ENCODE measurements at regions of chr1 and their contacts with region 1.

Region 1: DNA sequence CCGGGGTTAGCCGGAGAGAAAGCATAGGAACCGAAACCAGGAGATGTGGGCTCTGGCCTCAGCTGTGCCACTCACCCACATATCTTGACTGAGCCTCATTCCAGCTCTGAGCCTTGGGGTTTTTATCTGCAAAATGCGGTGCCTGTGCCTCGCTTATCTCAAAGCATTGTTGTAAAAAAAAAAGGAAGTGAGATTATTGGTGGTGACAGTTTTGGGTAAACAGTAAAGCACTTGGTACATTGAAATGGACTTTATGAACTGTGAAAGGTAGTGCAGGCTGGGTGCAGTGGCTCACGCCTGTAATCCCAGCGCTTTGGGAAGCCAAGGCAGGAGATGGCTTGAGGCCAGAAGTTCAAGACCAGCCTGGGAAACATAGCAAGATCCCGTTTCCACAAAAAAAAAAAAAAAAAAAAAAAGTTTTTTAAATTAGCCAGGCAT is 3.8 kb downstream of the PTAFR start:
- H3K4me3 Mint-ChIP-seq: peak overlapping the region; percentile 66
- H3K27ac Mint-ChIP-seq: peak overlapping the region; percentile 91
- H3K4me1 Mint-ChIP-seq: peaks cover 77% of the 10 kb centered on the region
- H3K27me3 Mint-ChIP-seq: no peaks in the 10 kb centered on the region

Region 2: DNA sequence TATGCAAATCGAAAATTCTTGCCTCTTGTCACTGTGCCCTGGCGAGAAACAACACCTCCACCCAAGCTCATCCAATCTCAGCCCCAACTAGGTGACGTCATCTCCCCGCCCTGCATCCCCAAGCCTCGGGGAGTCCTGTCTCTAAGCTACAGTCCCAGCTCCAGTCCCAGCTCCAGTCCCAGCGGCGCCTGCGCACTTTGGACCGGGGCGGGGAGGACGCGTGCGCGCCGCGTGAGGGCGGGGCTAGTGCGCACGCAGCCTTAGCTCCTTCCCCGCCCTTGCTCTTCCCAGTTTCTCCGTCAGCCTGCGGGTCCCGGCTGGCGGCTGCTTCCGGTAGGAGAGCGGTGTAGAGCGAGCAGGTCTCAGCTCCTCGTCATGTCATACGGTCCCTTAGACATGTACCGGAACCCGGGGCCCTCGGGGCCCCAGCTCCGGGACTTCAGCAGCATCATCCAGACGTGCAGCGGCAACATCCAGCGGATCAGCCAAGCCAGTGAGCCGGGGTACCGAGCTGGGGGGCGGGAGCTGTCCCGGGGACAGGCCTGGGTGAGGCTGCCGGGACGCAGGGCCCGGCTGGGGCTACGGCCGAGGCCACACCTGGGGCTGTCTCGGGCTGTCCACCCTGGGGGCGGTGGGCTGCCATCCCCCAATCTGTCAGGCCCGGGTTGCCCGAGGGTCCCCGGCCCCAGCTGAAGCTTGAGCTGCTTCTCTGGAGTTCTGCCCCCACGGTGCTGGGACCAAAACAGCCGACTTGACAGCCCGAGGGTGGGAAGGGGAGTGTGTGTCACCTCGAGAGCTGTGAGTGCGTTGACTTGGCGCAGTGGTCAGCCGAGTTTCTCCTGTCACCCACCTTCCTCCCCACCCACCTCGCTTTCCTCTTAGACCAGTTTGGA is 399.6 kb before region 1 on chr1 and contains the start of gene STX12:
- intact Hi-C with region 1: no loop called
- H3K4me3 Mint-ChIP-seq: peak within 1 kb of the TSS; percentile 94
- H3K27ac Mint-ChIP-seq: peak within 1 kb of the TSS; percentile 87
- H3K4me1 Mint-ChIP-seq: peaks cover 28% of the 10 kb centered on the region
- H3K27me3 Mint-ChIP-seq: no peaks in the 10 kb centered on the region

Region 3: GRCh38 chr1:28088168-28088961 is 84.4 kb before region 1 on chr1 and contains the start of gene EYA3:
- intact Hi-C with region 1: loop called (anchors 5 kb)
- H3K4me3 Mint-ChIP-seq: peak within 1 kb of the TSS; percentile 90
- H3K27ac Mint-ChIP-seq: peak within 1 kb of the TSS; percentile 93
- H3K4me1 Mint-ChIP-seq: peaks cover 57% of the 10 kb centered on the region
- H3K27me3 Mint-ChIP-seq: no peaks in the 10 kb centered on the region

Region 4: GRCh38 chr1:28112388-28113241 is 60.1 kb before region 1 on chr1:
- intact Hi-C with region 1: loop called (anchors 1 kb)
- H3K4me3 Mint-ChIP-seq: peak overlapping the region; percentile 13
- H3K27ac Mint-ChIP-seq: peak overlapping the region; percentile 96
- H3K4me1 Mint-ChIP-seq: peaks cover 73% of the 10 kb centered on the region
- H3K27me3 Mint-ChIP-seq: no peaks in the 10 kb centered on the region

Region 5: GRCh38 chr1:28139025-28139712 is 33.6 kb before region 1 on chr1:
- intact Hi-C with region 1: loop called (anchors 5 kb)
- H3K4me3 Mint-ChIP-seq: peak overlapping the region; percentile 22
- H3K27ac Mint-ChIP-seq: peak overlapping the region; percentile 95
- H3K4me1 Mint-ChIP-seq: peaks cover 87% of the 10 kb centered on the region
- H3K27me3 Mint-ChIP-seq: no peaks in the 10 kb centered on the region

Region 6: DNA sequence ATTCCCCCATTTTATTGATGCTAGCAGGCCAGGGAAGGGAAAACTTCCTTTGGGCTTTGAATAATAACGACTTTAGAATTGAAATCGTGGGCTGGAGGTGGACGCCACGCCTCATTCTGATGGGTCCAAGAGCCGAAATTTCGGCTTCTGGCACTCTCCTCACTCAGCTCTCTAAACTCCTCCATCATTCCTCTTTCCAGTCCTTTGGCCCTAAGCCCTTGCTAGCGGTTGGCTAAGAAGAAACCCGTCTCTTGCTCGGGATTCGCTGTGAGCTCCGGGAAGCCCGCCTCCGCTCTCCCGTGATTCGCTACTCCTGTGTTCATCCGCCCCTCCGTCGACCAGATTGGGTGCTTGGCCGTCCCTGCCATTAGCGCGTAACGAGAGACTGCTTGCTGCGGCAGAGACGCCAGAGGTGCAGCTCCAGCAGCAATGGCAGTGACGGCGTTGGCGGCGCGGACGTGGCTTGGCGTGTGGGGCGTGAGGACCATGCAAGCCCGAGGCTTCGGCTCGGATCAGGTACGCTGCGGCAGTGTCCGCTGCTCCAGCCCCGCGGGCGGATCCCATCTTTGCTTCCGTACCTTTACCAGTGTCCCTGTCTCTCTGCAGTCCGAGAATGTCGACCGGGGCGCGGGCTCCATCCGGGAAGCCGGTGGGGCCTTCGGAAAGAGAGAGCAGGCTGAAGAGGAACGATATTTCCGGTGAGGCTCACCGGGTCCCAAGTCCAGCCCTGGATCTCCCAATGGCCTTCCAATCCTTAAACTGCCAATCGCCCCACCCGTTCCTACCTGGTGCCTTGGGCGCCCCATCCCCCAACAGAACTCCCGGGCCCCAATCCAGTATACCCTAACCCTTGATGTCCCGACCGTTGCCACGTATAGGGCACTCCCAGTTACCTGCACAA is 63.3 kb after region 1 on chr1 and contains the start of gene ATP5IF1:
- intact Hi-C with region 1: loop called (anchors 10 kb)
- H3K4me3 Mint-ChIP-seq: no peak within 1 kb of the TSS
- H3K27ac Mint-ChIP-seq: no peak within 1 kb of the TSS
- H3K4me1 Mint-ChIP-seq: peaks cover 13% of the 10 kb centered on the region
- H3K27me3 Mint-ChIP-seq: no peaks in the 10 kb centered on the region